ENCODE measurements at regions of chr12 and their contacts with region 1.

Region 1: DNA sequence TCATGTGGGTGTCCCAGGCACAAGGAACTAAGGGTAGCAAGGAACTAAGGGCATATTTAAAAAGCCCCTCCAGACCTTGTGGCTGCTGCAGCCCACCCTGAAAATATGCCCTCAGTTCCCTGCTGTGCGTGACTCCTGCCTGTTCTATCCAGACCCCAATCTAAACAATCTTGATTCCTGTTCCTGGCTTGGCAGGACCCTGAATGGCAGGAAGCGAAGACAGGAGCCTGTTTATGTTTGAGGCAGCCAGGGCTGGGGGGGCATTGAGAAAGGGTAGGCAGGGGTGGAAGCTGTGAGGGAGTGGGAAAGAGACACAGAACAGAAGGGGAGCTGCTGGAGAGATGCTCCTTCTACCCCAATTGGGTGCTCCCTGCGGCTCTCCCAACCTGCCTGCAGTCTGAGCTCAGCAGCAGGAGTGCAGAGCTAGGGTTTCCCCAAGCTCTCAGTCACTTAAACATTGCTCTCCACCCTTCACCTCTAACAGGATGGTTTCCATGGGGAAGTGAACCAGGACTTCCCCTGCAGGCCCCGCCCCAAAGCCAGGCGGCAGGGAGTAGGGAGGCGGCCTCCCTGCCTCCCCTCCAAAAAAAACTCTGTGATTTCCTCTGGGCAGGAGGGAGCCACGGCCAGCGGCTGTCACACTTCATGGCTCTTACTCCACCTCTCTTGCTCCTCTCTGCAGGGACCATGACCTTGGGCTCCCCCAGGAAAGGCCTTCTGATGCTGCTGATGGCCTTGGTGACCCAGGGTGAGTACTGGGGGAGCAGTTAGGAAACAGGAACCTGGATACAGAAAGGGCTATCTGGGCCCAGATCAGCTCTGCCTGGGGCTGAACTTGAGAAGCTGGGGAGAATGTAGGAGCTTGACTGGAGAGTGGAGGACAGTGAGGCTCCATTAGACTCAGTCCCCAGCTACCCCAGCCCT is 4.7 kb downstream of the ACVRL1 start:
- DNase-seq: no peak
- H3K4me3 ChIP-seq: no peak overlapping the region
- H3K27ac ChIP-seq: no peak overlapping the region
- H3K4me1 ChIP-seq: peaks cover 0 to 8% (median 1%) of the 10 kb centered on the region in 4 experiments; a peak in 4 of 7 replicates
- H3K27me3 ChIP-seq: peaks cover 4 to 22% (median 14%) of the 10 kb centered on the region in 4 experiments
- CTCF ChIP-seq: no peak
- EP300 ChIP-seq: no peak
- POLR2A ChIP-seq: no peak
- RAD21 ChIP-seq: no peak

Region 2: DNA sequence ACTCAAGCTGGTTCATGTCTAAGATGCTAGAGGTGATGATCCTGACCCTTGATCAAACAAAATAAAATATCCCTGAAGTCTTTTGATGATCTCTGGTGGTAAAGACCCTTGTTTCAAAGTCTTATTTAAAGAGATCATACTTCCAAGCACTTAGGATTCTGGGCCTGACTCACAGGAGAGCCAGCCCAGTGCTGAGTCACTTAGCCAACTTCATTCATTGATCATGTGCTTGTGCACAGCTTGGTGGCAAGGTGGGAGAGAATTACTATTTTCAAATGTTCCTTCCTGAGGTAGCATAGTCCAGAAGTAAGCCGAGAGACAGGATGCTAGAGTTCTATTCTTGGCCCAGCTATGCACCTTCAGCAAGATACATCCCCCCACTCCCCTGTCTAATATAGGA is 280.5 kb before region 1 on chr12:
- CTCF ChIA-PET with region 1: no interaction called
- POLR2A ChIA-PET with region 1: no interaction called
- DNase-seq: no peak
- H3K4me3 ChIP-seq: no peak overlapping the region
- H3K27ac ChIP-seq: no peak overlapping the region
- H3K4me1 ChIP-seq: peaks cover 0 to 9% (median 0%) of the 10 kb centered on the region in 4 experiments; a peak in 3 of 7 replicates
- H3K27me3 ChIP-seq: peaks cover 0 to 1% (median 0%) of the 10 kb centered on the region in 4 experiments; a peak in 1 of 7 replicates
- CTCF ChIP-seq: no peak
- EP300 ChIP-seq: no peak
- POLR2A ChIP-seq: no peak
- RAD21 ChIP-seq: no peak

Region 3: GRCh38 chr12:51871126-51871525 is 40.9 kb before region 1 on chr12:
- CTCF ChIA-PET with region 1: interaction called, 11 read pairs
- POLR2A ChIA-PET with region 1: no interaction called
- DNase-seq: no peak
- H3K4me3 ChIP-seq: no peak overlapping the region
- H3K27ac ChIP-seq: no peak overlapping the region
- H3K4me1 ChIP-seq: peaks cover 4 to 30% (median 20%) of the 10 kb centered on the region in 4 experiments
- H3K27me3 ChIP-seq: peaks cover 0 to 29% (median 24%) of the 10 kb centered on the region in 4 experiments; a peak in 6 of 7 replicates
- CTCF ChIP-seq: peak in 2 of 3 experiments; percentile 6 to 31; a peak in 3 of 4 replicates
- EP300 ChIP-seq: no peak
- POLR2A ChIP-seq: no peak
- RAD21 ChIP-seq: peak in 1 of 2 experiments; percentile 9; a peak in 1 of 4 replicates

Region 4: DNA sequence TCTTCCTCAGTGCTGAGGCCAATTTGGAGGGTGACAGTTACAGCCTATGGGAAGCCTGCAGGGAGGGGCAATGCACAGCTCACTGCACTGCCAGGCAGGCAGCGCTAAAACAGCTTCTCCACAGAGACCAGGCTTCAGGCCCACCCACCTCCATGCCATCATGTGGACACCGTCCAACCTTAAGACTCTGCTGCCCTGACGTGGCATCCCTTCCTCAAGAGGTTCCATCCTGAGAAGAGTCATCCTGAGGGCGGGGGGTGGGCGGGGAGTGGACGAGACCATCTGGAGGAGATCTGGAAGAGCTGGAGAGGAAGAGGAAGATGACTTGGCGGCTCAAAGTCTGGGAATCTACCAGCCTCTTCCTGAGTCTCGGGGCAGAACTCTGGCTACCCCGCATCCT is 13.1 kb before region 1 on chr12:
- CTCF ChIA-PET with region 1: interaction called, 77 read pairs
- POLR2A ChIA-PET with region 1: interaction called, 3 read pairs
- DNase-seq: no peak
- H3K4me3 ChIP-seq: no peak overlapping the region
- H3K27ac ChIP-seq: no peak overlapping the region
- H3K4me1 ChIP-seq: no peaks in the 10 kb centered on the region
- H3K27me3 ChIP-seq: no peaks in the 10 kb centered on the region
- CTCF ChIP-seq: no peak
- EP300 ChIP-seq: no peak
- POLR2A ChIP-seq: no peak
- RAD21 ChIP-seq: no peak

Region 5: GRCh38 chr12:51970904-51971646 is 59.0 kb after region 1 on chr12:
- CTCF ChIA-PET with region 1: interaction called, 25 read pairs
- POLR2A ChIA-PET with region 1: no interaction called
- DNase-seq: peak in 1 of 2 experiments; percentile 62
- H3K4me3 ChIP-seq: no peak overlapping the region
- H3K27ac ChIP-seq: no peak overlapping the region
- H3K4me1 ChIP-seq: peaks cover 3 to 10% (median 6%) of the 10 kb centered on the region in 4 experiments; a peak in 5 of 7 replicates
- H3K27me3 ChIP-seq: no peaks in the 10 kb centered on the region
- CTCF ChIP-seq: peak; percentile 85 to 97 (median 95)
- EP300 ChIP-seq: no peak
- POLR2A ChIP-seq: no peak
- RAD21 ChIP-seq: peak; percentile 34 to 50

Region 6: DNA sequence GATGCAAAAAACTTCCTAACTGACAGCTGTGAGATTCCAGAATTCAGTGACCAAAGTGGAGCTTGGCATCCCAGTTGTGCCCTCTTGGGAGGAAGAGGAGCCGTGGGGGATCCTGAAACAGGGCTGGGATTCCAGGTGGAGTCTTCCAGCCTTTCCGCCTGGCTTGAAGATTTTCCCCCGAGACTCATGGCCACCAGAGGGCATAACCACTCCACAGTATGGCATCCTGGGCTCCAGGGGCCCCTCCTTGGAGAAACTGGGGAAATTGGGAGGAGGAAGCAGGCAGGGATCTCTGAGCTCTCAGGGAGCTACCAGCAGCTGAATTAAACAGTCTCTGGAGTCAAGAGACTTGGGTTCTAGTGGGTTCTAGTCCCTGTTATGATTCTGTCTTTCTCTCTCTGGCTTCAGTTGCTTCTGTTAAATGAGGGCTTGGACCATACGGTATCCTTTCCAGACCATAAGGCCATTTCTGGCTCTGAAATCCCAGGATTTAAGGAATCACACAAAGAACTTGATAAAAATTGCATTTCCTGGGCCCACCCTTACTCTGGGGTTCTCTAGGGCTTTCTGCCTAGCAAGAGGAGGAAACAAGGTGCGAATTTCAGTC is 92.1 kb after region 1 on chr12:
- CTCF ChIA-PET with region 1: interaction called, 12 read pairs
- POLR2A ChIA-PET with region 1: no interaction called
- DNase-seq: peak in 1 of 2 experiments; percentile 81
- H3K4me3 ChIP-seq: no peak overlapping the region
- H3K27ac ChIP-seq: no peak overlapping the region
- H3K4me1 ChIP-seq: peaks cover 0 to 16% (median 8%) of the 10 kb centered on the region in 4 experiments; a peak in 6 of 7 replicates
- H3K27me3 ChIP-seq: peaks cover 19 to 47% (median 44%) of the 10 kb centered on the region in 4 experiments
- CTCF ChIP-seq: peak in 2 of 3 experiments; percentile 83 to 93; a peak in 3 of 4 replicates
- EP300 ChIP-seq: no peak
- POLR2A ChIP-seq: no peak
- RAD21 ChIP-seq: peak; percentile 91 to 95